ENCODE measurements at regions of chr1 and their contacts with region 1.

Region 1: GRCh38 chr1:224407571-224408560 is 26.7 kb downstream of the WDR26 start:
- DNase-seq: no peak
- H3K4me3 Mint-ChIP-seq: no peak overlapping the region
- H3K27ac Mint-ChIP-seq: no peak overlapping the region
- H3K4me1 Mint-ChIP-seq: peaks cover 34% of the 10 kb centered on the region
- H3K27me3 Mint-ChIP-seq: no peaks in the 10 kb centered on the region

Region 2: DNA sequence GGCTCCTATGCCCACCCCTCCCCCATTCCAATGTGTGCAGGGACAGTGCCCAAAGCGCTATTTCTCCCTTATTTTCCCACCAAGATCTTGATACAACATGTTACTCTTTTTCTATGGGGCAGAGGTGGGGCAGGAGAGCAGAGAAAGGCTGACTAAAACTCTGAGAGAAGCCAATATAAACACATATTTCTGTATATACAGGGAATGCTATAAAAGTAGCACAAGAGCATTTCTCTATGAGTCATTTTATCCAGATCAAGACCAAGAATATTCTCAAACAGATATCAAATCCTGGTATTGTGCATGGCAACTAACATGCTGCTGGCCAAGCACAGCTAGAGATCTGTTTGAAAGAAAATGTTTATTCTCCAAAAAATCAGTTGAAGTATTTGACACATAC is 19.5 kb after region 1 on chr1:
- CTCF ChIA-PET with region 1: no interaction called
- POLR2A ChIA-PET with region 1: no interaction called
- intact Hi-C with region 1: loop called (anchors 2 kb)
- DNase-seq: no peak
- H3K4me3 Mint-ChIP-seq: no peak overlapping the region
- H3K27ac Mint-ChIP-seq: no peak overlapping the region
- H3K4me1 Mint-ChIP-seq: peaks cover 55% of the 10 kb centered on the region
- H3K27me3 Mint-ChIP-seq: no peaks in the 10 kb centered on the region

Measured in activated CD4-positive, alpha-beta memory T cell treated with anti-CD3 and anti-CD28 coated beads for 36 hours (primary cell).